GM12878 (cell line): ENCODE measurements at regions of chr11 and their contacts with region 1.

Region 1: GRCh38 chr11:9748361-9748970 is 84.6 kb downstream of the SWAP70 start:
- DNase-seq: peak; percentile 72
- ATAC-seq: peak; percentile 90
- H3K4me3 ChIP-seq: no peak overlapping the region
- H3K27ac ChIP-seq: no peak overlapping the region
- H3K4me1 ChIP-seq: peaks cover 42% of the 10 kb centered on the region
- H3K27me3 ChIP-seq: no peaks in the 10 kb centered on the region
- CTCF ChIP-seq: peak; percentile 83 to 92 (median 91)
- EP300 ChIP-seq: no peak; a peak in 1 of 4 replicates
- POLR2A ChIP-seq: no peak
- RAD21 ChIP-seq: peak; percentile 97

Region 2: DNA sequence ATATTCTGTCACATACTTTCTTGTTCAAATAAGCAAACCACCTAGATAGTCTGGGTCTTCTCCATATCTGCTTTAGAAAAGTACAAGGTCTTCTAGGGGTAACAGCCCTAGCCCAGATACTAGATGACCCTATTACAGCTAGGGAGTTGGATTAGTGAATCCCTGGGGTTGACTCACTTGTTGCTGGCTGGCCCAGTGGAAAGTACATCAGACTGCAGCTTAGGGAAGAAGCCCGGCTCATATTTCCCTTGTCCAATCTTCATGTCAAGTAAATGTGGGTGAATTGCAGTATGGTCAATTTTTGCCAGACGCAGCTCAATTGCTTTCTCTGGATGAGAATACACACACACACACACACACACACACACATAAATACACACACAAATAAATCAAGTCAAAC is 578.0 kb before region 1 on chr11:
- CTCF ChIA-PET with region 1: interaction called, 10 read pairs
- POLR2A ChIA-PET with region 1: no interaction called
- RAD21 ChIA-PET with region 1: no interaction called
- SMC1A ChIA-PET with region 1: interaction called, 3 read pairs
- in situ Hi-C with region 1: no loop called
- intact Hi-C with region 1: no loop called
- DNase-seq: no peak
- ATAC-seq: no peak
- H3K4me3 ChIP-seq: no peak overlapping the region
- H3K27ac ChIP-seq: no peak overlapping the region
- H3K4me1 ChIP-seq: no peaks in the 10 kb centered on the region
- H3K27me3 ChIP-seq: no peaks in the 10 kb centered on the region
- CTCF ChIP-seq: no peak
- EP300 ChIP-seq: no peak
- POLR2A ChIP-seq: no peak
- RAD21 ChIP-seq: no peak

Region 3: GRCh38 chr11:9534791-9535781 is 213.4 kb before region 1 on chr11:
- CTCF ChIA-PET with region 1: interaction called, 119 read pairs
- POLR2A ChIA-PET with region 1: interaction called, 3 read pairs
- RAD21 ChIA-PET with region 1: interaction called, 53 read pairs
- SMC1A ChIA-PET with region 1: interaction called, 62 read pairs
- in situ Hi-C with region 1: loop called (anchors 5 kb)
- intact Hi-C with region 1: loop called (anchors 1 kb)
- DNase-seq: peak; percentile 25
- ATAC-seq: peak; percentile 87
- H3K4me3 ChIP-seq: no peak overlapping the region
- H3K27ac ChIP-seq: no peak overlapping the region
- H3K4me1 ChIP-seq: no peaks in the 10 kb centered on the region
- H3K27me3 ChIP-seq: no peaks in the 10 kb centered on the region
- CTCF ChIP-seq: peak; percentile 79 to 92 (median 86)
- EP300 ChIP-seq: no peak
- POLR2A ChIP-seq: no peak
- RAD21 ChIP-seq: peak; percentile 79

Region 4: DNA sequence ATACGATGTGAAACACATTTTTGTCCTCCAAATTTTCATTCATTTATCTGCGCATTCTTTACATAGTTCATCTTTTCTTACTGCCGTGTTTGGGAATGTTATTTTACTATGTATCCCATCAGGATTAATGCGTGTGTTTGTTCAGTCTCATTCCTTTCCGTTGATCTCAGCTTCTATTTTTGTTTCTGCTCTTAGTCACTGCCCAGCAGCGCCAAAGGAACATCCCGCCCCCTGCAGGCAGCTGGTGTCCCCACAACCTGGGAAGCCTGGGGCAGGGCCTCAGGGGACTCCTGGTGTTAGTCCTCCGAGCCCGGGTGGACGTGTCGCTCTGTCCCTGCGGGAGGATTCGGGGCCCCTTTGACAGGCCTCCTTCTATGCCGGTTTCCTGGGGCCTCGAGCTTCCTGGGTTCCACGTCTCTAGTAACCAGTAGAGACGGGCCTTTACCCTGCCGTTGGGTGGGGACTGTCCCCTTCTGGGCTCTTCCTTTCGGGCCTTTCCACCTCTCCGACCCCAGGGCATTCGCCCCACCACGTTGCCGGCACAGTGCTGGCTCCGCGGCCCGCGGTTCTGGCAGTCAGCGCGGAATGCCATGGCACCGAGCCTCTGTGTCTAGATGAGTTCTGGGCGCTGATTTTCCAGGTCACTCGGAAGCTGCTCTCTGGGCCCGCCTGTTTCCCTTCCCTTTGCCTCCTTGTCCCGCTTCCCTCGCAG is 135.2 kb before region 1 on chr11:
- CTCF ChIA-PET with region 1: interaction called, 126 read pairs
- POLR2A ChIA-PET with region 1: interaction called, 11 read pairs
- RAD21 ChIA-PET with region 1: interaction called, 45 read pairs
- SMC1A ChIA-PET with region 1: interaction called, 84 read pairs
- in situ Hi-C with region 1: loop called (anchors 5 kb)
- intact Hi-C with region 1: loop called (anchors 1 kb)
- DNase-seq: no peak
- ATAC-seq: peak; percentile 70
- H3K4me3 ChIP-seq: peak overlapping the region; percentile 68
- H3K27ac ChIP-seq: peak overlapping the region; percentile 91
- H3K4me1 ChIP-seq: peaks cover 43% of the 10 kb centered on the region
- H3K27me3 ChIP-seq: no peaks in the 10 kb centered on the region
- CTCF ChIP-seq: peak; percentile 94 to 97 (median 96)
- EP300 ChIP-seq: no peak
- POLR2A ChIP-seq: peak; percentile 60
- RAD21 ChIP-seq: peak; percentile 93

Region 5: DNA sequence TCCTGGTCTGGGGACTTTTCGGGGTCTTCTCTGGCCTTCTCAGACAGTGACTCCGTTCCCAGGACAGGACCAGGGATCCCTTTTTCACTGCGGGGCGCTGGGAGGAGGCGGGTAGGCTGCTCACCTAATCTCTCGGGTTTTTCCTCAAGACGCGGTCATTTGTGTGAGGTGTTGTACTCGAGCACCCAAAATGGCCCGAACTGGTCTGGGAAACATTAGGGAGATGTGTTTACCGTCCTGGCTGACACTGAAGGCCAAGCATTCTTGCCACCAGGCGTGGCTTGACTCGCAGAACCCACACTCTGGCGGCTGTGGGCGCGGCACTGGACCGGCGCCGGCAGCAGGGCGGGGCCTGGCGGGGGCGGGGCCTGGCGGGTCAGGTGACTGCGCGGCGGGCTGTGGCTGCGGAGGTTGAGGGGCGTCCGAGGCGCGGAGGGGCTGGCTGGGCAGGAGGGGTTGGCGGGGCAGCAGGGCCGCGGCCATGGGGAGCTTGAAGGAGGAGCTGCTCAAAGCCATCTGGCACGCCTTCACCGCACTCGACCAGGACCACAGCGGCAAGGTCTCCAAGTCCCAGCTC is 84.7 kb before region 1 on chr11 and contains the start of gene SWAP70:
- CTCF ChIA-PET with region 1: interaction called, 11 read pairs
- POLR2A ChIA-PET with region 1: interaction called, 4 read pairs
- RAD21 ChIA-PET with region 1: interaction called, 9 read pairs
- SMC1A ChIA-PET with region 1: interaction called, 6 read pairs
- in situ Hi-C with region 1: no loop called
- intact Hi-C with region 1: loop called (anchors 5 kb)
- DNase-seq: no peak
- ATAC-seq: peak; percentile 88
- H3K4me3 ChIP-seq: peak within 1 kb of the TSS; percentile 97
- H3K27ac ChIP-seq: peak within 1 kb of the TSS; percentile 86
- H3K4me1 ChIP-seq: peaks cover 26% of the 10 kb centered on the region
- H3K27me3 ChIP-seq: no peaks in the 10 kb centered on the region
- CTCF ChIP-seq: no peak
- EP300 ChIP-seq: no peak
- POLR2A ChIP-seq: peak; percentile 88
- RAD21 ChIP-seq: no peak
- polyA plus RNA-seq, gene SWAP70: 28.7 to 30.9 TPM

Region 6: GRCh38 chr11:9700105-9700801 is 48.2 kb before region 1 on chr11:
- CTCF ChIA-PET with region 1: interaction called, 12 read pairs
- POLR2A ChIA-PET with region 1: no interaction called
- RAD21 ChIA-PET with region 1: interaction called, 5 read pairs
- SMC1A ChIA-PET with region 1: no interaction called
- in situ Hi-C with region 1: no loop called
- intact Hi-C with region 1: no loop called
- DNase-seq: no peak
- ATAC-seq: no peak
- H3K4me3 ChIP-seq: no peak overlapping the region
- H3K27ac ChIP-seq: no peak overlapping the region
- H3K4me1 ChIP-seq: peaks cover 34% of the 10 kb centered on the region
- H3K27me3 ChIP-seq: no peaks in the 10 kb centered on the region
- CTCF ChIP-seq: no peak
- EP300 ChIP-seq: no peak
- POLR2A ChIP-seq: no peak
- RAD21 ChIP-seq: no peak

Region 7: GRCh38 chr11:9774591-9775397 is 26.3 kb after region 1 on chr11:
- CTCF ChIA-PET with region 1: no interaction called
- POLR2A ChIA-PET with region 1: no interaction called
- RAD21 ChIA-PET with region 1: no interaction called
- SMC1A ChIA-PET with region 1: no interaction called
- in situ Hi-C with region 1: no loop called
- intact Hi-C with region 1: no loop called
- DNase-seq: no peak
- ATAC-seq: no peak
- H3K4me3 ChIP-seq: no peak overlapping the region
- H3K27ac ChIP-seq: no peak overlapping the region
- H3K4me1 ChIP-seq: no peaks in the 10 kb centered on the region
- H3K27me3 ChIP-seq: no peaks in the 10 kb centered on the region
- CTCF ChIP-seq: no peak
- EP300 ChIP-seq: no peak
- POLR2A ChIP-seq: no peak
- RAD21 ChIP-seq: no peak

Region 8: DNA sequence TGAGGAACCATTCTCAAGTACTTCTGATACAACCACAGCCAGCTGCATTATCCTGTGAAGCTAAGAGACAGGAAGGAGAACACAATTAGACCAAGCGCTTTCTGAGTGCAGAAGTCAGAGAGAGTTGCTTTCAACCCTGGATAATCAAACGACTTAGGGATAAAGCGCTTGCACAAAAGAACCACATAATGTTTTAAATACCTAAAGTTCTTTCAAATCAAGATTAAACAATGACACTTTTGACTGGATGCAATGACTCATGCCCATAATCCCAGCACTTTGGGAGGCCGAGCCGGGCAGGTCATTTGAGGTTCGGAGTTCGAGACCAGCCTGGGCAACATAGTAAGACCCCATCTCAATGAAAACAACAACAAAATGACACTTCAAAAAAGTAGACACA is 60.5 kb after region 1 on chr11:
- CTCF ChIA-PET with region 1: no interaction called
- POLR2A ChIA-PET with region 1: no interaction called
- RAD21 ChIA-PET with region 1: no interaction called
- SMC1A ChIA-PET with region 1: no interaction called
- in situ Hi-C with region 1: no loop called
- intact Hi-C with region 1: no loop called
- DNase-seq: no peak
- ATAC-seq: no peak
- H3K4me3 ChIP-seq: no peak overlapping the region
- H3K27ac ChIP-seq: no peak overlapping the region
- H3K4me1 ChIP-seq: no peaks in the 10 kb centered on the region
- H3K27me3 ChIP-seq: no peaks in the 10 kb centered on the region; a peak in 1 of 4 replicates
- CTCF ChIP-seq: no peak
- EP300 ChIP-seq: no peak
- POLR2A ChIP-seq: no peak
- RAD21 ChIP-seq: no peak

Region 9: GRCh38 chr11:9982800-9983579 is 234.5 kb after region 1 on chr11:
- CTCF ChIA-PET with region 1: no interaction called
- POLR2A ChIA-PET with region 1: no interaction called
- RAD21 ChIA-PET with region 1: no interaction called
- SMC1A ChIA-PET with region 1: no interaction called
- in situ Hi-C with region 1: no loop called
- intact Hi-C with region 1: no loop called
- DNase-seq: no peak
- ATAC-seq: no peak
- H3K4me3 ChIP-seq: no peak overlapping the region
- H3K27ac ChIP-seq: no peak overlapping the region
- H3K4me1 ChIP-seq: no peaks in the 10 kb centered on the region
- H3K27me3 ChIP-seq: no peaks in the 10 kb centered on the region
- CTCF ChIP-seq: no peak
- EP300 ChIP-seq: no peak
- POLR2A ChIP-seq: no peak
- RAD21 ChIP-seq: no peak

Region 10: DNA sequence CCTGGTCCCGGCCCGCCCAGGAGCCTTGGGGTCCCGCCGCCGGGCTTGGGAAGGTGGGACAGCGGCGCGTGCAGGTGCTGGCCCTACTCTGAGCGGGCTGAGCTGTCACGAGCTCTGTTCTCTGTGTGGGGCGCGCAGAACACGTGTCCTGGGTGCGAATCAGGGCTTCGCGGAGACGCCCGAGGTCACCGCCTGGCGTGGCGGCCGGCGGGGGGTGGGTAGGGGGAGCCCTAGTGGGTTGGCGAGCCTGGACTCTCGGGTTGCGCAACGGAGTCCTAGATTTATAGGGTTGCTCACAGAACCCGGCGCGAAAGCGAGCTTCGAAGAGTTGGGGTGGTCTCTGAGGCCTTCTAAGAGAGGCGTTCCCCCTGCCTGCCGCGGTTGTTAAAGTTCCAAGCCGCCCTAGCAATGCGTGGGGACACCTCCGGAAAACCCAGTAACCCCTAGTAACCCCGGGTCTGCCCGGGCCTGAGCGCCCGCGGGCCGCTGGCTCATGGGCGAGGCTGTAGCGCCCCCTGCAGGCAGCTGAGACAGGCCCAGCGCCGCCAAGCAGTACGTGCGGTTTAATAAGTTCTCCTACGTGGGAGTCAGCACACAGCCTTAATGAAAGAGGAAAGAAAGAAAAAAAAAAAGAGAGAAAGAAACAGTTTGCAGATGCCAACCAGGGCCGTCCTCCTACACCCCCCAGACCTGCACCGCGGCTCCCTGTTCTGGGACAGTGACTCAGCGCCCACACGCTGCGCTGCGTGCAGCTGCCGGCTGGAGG is 559.2 kb after region 1 on chr11:
- CTCF ChIA-PET with region 1: interaction called, 10 read pairs
- POLR2A ChIA-PET with region 1: no interaction called
- RAD21 ChIA-PET with region 1: no interaction called
- SMC1A ChIA-PET with region 1: interaction called, 3 read pairs
- in situ Hi-C with region 1: no loop called
- intact Hi-C with region 1: no loop called
- DNase-seq: peak; percentile 60
- ATAC-seq: peak; percentile 84
- H3K4me3 ChIP-seq: peak overlapping the region; percentile 48; the same call in 1 of the 2 replicates
- H3K27ac ChIP-seq: peak overlapping the region; percentile 20; the same call in 1 of the 2 replicates
- H3K4me1 ChIP-seq: peaks cover 47% of the 10 kb centered on the region
- H3K27me3 ChIP-seq: peaks cover 32 to 41% of the 10 kb centered on the region in 2 experiments
- CTCF ChIP-seq: peak; percentile 78 to 89 (median 87)
- EP300 ChIP-seq: 0 out of 4 replicates have a peak, but pooled peaks of 1 of the 2 experiments have one; percentile 16
- POLR2A ChIP-seq: no peak; the same call in 1 of the 2 replicates
- RAD21 ChIP-seq: peak; percentile 86